Activated naive CD4-positive, alpha-beta T cell treated with anti-CD3 and anti-CD28 coated beads for 36 hours (primary cell): ENCODE measurements at regions of chr16 and their contacts with region 1.

Region 1: DNA sequence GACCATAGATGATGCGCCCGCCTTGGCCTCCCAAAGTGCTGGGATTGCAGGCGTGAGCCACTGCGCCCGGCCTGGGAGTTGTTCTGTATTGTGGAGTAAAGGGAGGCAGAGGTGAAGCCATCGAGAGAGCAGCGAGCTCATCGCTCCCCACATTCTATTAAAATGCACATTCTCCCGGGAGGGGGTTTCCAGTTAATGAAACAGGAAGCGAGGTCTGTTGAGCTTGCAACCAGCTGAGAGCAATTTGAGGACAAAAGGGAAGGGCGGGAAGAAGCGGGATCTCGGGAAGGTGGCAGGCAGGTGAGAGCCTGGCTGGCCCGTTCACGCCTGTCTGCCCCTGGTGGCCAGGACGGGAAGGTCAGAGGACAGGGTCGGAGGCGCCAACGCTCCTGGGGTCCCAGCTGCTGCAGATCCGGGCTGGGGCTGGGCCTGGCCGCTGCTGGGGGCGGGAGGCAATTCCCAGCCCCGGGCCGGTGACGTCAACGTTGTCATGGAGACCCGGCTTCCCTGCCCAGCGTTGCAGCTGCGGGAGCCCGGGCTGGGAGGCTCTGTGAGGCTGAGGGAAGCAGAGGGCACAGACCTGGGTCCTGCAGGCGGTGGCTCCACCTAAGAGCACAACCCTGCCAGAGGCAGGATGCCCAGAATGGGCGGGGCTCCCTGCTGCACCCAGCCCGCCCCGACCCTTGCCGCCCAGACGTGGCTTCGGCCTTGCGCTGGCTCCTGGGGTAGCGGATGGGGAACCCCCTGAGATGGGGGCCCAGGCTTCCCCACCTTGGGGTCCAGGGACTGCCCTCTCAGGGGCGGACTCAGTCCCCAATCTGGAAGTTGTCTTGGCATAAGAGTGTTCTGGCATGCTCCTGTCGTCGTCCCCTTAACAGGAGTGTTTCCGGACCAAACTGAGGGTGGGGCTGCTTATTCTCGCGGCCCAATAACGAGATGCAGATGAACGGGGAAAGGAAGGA is 48.7 kb upstream of the PLCG2 start:
- DNase-seq: peak; percentile 67
- H3K4me3 Mint-ChIP-seq: peak overlapping the region; percentile 75
- H3K27ac Mint-ChIP-seq: peak overlapping the region; percentile 74
- H3K4me1 Mint-ChIP-seq: peaks cover 16% of the 10 kb centered on the region
- H3K27me3 Mint-ChIP-seq: no peaks in the 10 kb centered on the region

Region 2: DNA sequence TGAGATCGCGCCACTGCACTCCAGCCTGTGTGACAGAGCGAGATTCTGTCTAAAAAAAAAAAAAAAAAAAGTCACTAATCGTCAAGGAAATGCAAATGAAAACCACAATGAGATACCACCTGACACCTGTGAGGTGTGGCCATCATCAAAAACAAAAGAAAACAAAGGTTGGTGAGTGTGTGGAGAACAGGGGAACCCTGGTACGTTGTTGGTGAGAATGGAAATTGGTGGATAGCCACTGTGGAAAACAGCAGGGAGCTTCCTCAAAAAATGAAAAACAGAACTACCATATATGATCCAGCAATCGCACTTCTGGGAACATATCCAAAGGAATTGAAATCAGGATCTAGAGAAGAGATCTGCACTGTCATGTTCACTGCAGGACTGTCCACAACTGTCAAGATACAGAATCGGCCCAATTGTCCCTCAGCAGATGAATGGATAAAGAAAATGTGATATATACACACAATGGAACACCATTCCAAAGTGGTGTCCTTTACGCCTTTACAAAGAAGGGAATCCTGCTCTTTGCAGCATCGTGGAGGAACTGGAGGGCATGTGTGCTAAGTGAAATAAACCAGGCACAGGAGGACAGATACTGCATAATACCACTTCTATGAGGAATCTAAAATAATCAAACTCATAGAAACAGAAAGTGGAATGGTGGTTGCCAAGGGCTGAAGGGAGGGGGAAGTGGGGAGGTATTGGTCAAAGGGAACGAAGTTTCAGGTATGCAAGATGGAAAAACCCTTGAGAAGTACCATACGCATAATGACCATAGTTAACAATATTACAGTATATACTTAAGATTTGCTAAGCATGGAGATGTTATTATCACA is 14.8 kb before region 1 on chr16:
- CTCF ChIA-PET with region 1: interaction called, 13 read pairs
- intact Hi-C with region 1: loop called (anchors 1 kb)
- DNase-seq: peak; percentile 54
- H3K4me3 Mint-ChIP-seq: no peak overlapping the region
- H3K27ac Mint-ChIP-seq: peak overlapping the region; percentile 25
- H3K4me1 Mint-ChIP-seq: peaks cover 37% of the 10 kb centered on the region
- H3K27me3 Mint-ChIP-seq: no peaks in the 10 kb centered on the region

Region 3: DNA sequence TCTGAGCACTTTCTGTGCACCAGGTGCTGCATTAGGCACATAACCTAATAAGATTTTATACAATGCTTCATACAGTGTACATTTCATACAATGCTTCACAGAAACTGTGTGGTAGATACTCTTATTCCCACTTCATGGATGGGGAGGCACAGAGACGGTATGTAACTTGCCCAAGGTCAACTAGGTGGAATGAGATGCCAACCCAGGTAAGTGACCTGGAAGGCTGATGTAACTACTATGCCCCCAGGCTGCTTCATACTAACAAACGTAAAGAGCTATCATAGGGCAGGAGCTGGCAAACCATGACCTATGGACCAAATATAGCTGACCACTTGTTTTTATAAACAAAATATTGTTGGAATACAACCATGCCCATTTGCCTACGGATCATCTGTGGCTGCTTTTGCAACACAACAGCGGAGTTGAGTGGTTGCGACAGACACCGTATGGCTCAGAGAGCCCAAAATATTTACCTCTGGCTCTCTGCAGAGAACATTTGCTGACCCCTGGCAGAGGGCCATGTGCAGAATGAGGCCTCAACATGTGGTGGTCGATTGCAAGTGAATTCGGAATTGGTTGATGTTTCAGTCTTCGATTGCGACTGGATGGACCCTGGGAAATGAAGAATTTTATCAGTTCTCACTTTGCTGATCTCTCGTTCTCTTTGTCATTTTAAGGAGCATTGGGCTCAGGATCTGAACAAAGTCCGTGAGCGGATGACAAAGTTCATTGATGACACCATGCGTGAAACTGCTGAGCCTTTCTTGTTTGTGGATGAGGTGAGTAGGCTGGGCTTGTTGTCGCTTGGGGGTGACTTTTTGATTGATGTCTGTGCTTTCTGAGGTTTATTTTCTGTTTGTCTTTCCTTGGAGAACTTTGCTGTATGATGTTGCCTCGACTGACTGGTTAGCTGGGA is 158.4 kb after region 1 on chr16:
- CTCF ChIA-PET with region 1: no interaction called
- intact Hi-C with region 1: no loop called
- DNase-seq: no peak
- H3K4me3 Mint-ChIP-seq: no peak overlapping the region
- H3K27ac Mint-ChIP-seq: no peak overlapping the region
- H3K4me1 Mint-ChIP-seq: no peaks in the 10 kb centered on the region
- H3K27me3 Mint-ChIP-seq: no peaks in the 10 kb centered on the region